ENCODE measurements at regions of chr1 and their contacts with region 1.

Region 1: DNA sequence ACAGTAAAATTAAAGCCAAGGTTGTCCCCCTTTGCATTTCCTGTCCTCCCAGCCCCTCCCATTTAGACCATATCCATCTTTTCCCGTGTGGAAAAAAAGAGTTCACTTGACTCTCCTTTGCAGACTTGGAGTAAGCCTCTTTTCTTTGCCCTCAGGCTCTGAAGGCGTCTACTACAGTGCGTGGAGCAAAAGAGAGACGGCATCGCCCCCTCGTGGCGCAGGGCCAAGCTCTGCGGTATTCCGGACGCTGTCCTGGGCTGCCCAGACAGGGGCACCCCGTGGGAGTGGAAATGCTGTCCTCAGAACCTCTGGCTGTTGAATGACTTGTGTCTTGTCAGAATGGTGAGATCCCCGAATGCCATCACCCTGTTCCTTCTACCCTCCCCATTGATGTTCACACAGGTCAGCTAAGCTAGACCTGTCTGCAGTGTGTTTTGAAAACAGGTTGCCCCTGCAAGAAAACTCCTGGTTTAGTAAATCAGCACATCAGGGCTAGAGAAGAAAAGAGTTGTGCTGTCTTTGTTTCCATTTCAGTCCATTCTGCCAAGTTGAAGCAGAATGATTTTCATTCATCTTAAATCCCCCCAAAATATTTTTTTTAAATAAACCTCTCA is 12.3 kb upstream of the GJA8 start:
- DNase-seq: no peak
- H3K4me3 ChIP-seq: no peak overlapping the region
- H3K27ac ChIP-seq: no peak overlapping the region
- H3K4me1 ChIP-seq: no peaks in the 10 kb centered on the region
- H3K27me3 ChIP-seq: no peaks in the 10 kb centered on the region
- CTCF ChIP-seq: peak; percentile 21 to 39 (median 33)
- POLR2A ChIP-seq: no peak

Region 2: DNA sequence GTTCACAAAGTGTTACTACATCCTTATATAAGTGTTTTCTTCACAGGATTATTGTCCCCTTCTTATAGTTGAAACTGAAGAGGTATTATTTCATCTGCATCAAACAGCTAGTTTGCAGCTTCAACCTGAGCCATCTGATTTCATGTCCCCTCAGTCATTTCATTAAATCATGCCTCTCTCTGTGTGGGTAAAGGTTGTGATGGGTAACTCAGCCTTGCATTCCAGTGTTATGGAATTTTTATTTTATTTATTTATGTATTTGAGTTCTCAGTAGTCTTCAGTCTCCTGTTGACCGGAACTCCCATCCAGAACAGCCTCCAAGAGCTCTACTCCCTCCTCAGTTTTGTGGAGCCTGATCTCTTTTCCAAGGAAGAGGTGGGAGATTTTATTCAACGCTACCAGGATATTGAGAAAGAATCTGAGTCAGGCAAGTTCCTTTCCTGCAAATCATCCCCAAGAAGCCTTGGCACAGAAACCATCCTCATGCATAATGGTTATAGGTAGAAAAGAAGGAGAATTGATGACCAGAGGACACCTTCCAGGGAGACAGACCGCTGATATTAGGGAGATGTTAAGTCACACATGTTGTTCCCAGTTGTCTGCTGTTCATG is 626.0 kb before region 1 on chr1:
- intact Hi-C with region 1: loop called (anchors 10 kb)
- DNase-seq: no peak
- H3K4me3 ChIP-seq: no peak overlapping the region
- H3K27ac ChIP-seq: no peak overlapping the region
- H3K4me1 ChIP-seq: no peaks in the 10 kb centered on the region
- H3K27me3 ChIP-seq: no peaks in the 10 kb centered on the region
- CTCF ChIP-seq: no peak
- POLR2A ChIP-seq: no peak

Region 3: GRCh38 chr1:147723691-147724323 is 166.5 kb before region 1 on chr1:
- intact Hi-C with region 1: loop called (anchors 5 kb)
- DNase-seq: no peak
- H3K4me3 ChIP-seq: no peak overlapping the region
- H3K27ac ChIP-seq: no peak overlapping the region
- H3K4me1 ChIP-seq: no peaks in the 10 kb centered on the region
- H3K27me3 ChIP-seq: no peaks in the 10 kb centered on the region
- CTCF ChIP-seq: peak in 2 of 3 experiments; percentile 29 to 35
- POLR2A ChIP-seq: no peak

Region 4: DNA sequence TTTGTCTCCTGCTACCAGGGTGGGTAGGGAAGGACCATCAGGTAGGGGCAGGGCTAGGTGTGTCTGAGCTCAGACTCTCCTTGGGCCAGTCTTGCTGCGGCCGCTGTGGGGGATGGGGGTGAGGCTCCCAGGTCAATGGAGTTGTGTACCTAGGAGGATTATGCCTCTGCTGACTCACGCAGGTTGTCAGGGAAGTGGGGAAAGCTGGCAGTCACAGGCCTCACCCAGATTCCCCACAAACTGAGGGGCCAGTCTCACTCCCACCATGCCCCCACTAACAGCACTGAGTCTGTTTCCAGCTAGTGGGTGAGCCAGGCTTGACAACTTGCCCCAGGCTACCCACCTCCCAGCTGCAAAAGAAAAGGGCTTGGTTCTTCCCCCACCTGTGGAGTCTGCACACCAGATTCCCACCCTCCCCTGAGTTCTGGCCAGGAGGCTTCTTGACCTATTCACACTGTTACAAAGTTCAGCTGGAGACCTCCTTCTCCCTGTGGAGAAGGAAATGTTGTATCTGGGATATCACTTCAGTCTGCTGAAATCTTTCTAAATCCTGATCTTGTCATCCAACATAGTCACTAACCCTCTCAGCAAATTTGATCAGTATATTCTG is 56.9 kb before region 1 on chr1:
- intact Hi-C with region 1: no loop called
- DNase-seq: no peak
- H3K4me3 ChIP-seq: no peak overlapping the region
- H3K27ac ChIP-seq: no peak overlapping the region
- H3K4me1 ChIP-seq: no peaks in the 10 kb centered on the region
- H3K27me3 ChIP-seq: no peaks in the 10 kb centered on the region
- CTCF ChIP-seq: no peak
- POLR2A ChIP-seq: no peak

Measured in vagina (tissue), 2 donors.